ENCODE measurements at regions of chr9 and their contacts with region 1.

Region 1: GRCh38 chr9:32431940-32432555 is 47.6 kb downstream of the ACO1 start:
- DNase-seq: peak in 1 of 2 donors; percentile 39
- H3K4me3 ChIP-seq: no peak overlapping the region
- H3K27ac ChIP-seq: peak overlapping the region in 1 of 2 donors; percentile 43
- H3K4me1 ChIP-seq: peaks cover 0 to 21% (median 0%) of the 10 kb centered on the region in 4 donors
- H3K27me3 ChIP-seq: no peaks in the 10 kb centered on the region
- CTCF ChIP-seq: peak; percentile 48 to 49

Region 2: DNA sequence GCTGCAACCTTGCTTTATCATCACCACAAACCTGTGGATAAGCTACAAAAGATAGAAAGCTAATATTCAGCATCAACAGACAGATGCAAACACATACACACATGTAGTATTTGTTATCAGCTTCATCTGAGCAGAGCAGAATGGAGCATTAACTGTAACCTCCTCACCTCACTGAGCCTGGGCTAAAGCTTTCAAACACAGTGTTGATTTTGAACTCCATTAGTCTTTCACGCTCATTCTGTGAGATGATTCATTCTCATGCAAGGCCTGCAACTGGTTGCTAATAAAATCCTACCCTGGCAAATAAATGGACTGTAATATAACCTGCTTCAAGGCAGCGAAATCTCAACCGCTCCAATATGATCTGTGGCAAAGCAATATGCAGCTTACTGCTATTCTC is 1408.2 kb before region 1 on chr9:
- intact Hi-C with region 1: no loop called
- DNase-seq: no peak
- H3K4me3 ChIP-seq: no peak overlapping the region
- H3K27ac ChIP-seq: no peak overlapping the region
- H3K4me1 ChIP-seq: no peaks in the 10 kb centered on the region
- H3K27me3 ChIP-seq: no peaks in the 10 kb centered on the region
- CTCF ChIP-seq: no peak

Region 3: GRCh38 chr9:32136700-32137339 is 295.2 kb before region 1 on chr9:
- intact Hi-C with region 1: no loop called
- DNase-seq: no peak
- H3K4me3 ChIP-seq: no peak overlapping the region
- H3K27ac ChIP-seq: no peak overlapping the region
- H3K4me1 ChIP-seq: no peaks in the 10 kb centered on the region
- H3K27me3 ChIP-seq: no peaks in the 10 kb centered on the region
- CTCF ChIP-seq: no peak

Region 4: GRCh38 chr9:32384364-32385151 is 47.5 kb before region 1 on chr9 and contains the start of gene ACO1:
- intact Hi-C with region 1: loop called (anchors 5 kb)
- DNase-seq: peak; percentile 85 to 94
- H3K4me3 ChIP-seq: peak within 1 kb of the TSS; percentile 66 to 77
- H3K27ac ChIP-seq: peak within 1 kb of the TSS; percentile 86 to 88
- H3K4me1 ChIP-seq: peaks cover 0 to 30% (median 13%) of the 10 kb centered on the region in 4 donors
- H3K27me3 ChIP-seq: no peaks in the 10 kb centered on the region
- CTCF ChIP-seq: peak in 1 of 2 experiments; percentile 10